Activated naive CD4-positive, alpha-beta T cell treated with anti-CD3 and anti-CD28 coated beads for 36 hours (primary cell): ENCODE measurements at regions of chr9 and their contacts with region 1.

Region 1: DNA sequence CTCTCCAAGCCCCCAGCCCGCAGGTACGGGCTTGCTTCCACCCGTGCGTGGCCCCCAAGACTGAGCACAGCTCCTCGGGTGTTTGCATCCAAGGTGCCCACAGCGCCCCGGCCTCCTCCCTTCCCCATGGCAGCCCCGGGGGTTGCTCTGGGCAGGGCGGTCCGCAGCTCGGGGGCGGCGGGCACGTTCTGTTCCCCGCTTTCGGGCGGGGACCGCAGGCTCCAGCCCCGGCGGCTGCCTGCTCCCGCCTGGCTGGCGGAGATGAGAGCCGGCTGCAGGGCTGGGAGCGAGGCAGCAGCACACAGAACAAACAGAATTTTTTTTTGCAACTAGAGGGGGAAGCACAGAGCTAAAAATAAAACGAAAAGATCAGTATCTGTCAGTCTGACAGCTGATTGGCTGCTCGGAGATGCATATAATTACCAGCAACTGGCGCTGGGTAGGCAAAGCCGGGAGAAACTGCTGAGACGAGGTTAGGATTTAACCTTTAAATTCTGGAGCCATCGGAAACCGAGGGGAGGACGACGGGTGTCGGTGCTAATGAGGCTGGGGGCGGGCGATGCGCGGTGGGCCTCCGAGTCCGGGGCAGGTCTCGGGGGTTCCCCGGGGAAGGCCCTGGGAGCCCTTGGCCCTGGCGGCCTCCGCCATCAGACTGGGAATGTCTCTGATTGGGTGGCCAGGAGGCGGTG is 142.7 kb upstream of the IER5L start:
- DNase-seq: peak; percentile 77
- H3K4me3 Mint-ChIP-seq: peak overlapping the region; percentile 68
- H3K27ac Mint-ChIP-seq: peak overlapping the region; percentile 67
- H3K4me1 Mint-ChIP-seq: peaks cover 18% of the 10 kb centered on the region
- H3K27me3 Mint-ChIP-seq: no peaks in the 10 kb centered on the region

Region 2: GRCh38 chr9:129131300-129132145 is 189.2 kb before region 1 on chr9:
- CTCF ChIA-PET with region 1: interaction called, 16 read pairs
- intact Hi-C with region 1: loop called (anchors 10 kb)
- DNase-seq: peak; percentile 90
- H3K4me3 Mint-ChIP-seq: no peak overlapping the region
- H3K27ac Mint-ChIP-seq: peak overlapping the region; percentile 27
- H3K4me1 Mint-ChIP-seq: peaks cover 6% of the 10 kb centered on the region
- H3K27me3 Mint-ChIP-seq: no peaks in the 10 kb centered on the region

Region 3: DNA sequence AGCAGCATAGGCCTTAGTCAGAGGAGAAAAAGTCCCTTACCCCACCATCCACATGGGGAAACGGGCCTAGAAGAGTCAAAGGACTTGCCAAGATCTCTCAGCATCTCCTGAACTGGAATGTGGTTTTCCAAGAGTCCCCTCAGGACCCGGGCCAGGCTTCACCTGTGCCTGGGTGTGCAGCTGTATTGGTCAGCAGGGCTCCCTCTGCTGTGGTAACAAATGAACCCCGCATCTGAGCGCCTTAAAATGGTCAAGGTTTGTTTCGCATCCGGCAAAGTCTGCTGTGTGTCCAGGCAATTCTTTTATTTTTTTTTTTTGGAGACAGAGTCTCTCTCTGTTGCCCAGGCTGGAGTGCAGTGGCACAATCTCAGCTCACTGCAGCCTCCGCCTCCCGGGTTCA is 25.3 kb after region 1 on chr9:
- CTCF ChIA-PET with region 1: interaction called, 6 read pairs
- intact Hi-C with region 1: loop called (anchors 1 kb)
- DNase-seq: no peak
- H3K4me3 Mint-ChIP-seq: no peak overlapping the region
- H3K27ac Mint-ChIP-seq: no peak overlapping the region
- H3K4me1 Mint-ChIP-seq: peaks cover 3% of the 10 kb centered on the region
- H3K27me3 Mint-ChIP-seq: no peaks in the 10 kb centered on the region

Region 4: GRCh38 chr9:129383561-129384416 is 63.1 kb after region 1 on chr9:
- CTCF ChIA-PET with region 1: no interaction called
- intact Hi-C with region 1: loop called (anchors 5 kb)
- DNase-seq: peak; percentile 80
- H3K4me3 Mint-ChIP-seq: peak overlapping the region; percentile 69
- H3K27ac Mint-ChIP-seq: peak overlapping the region; percentile 66
- H3K4me1 Mint-ChIP-seq: peaks cover 10% of the 10 kb centered on the region
- H3K27me3 Mint-ChIP-seq: no peaks in the 10 kb centered on the region

Region 5: DNA sequence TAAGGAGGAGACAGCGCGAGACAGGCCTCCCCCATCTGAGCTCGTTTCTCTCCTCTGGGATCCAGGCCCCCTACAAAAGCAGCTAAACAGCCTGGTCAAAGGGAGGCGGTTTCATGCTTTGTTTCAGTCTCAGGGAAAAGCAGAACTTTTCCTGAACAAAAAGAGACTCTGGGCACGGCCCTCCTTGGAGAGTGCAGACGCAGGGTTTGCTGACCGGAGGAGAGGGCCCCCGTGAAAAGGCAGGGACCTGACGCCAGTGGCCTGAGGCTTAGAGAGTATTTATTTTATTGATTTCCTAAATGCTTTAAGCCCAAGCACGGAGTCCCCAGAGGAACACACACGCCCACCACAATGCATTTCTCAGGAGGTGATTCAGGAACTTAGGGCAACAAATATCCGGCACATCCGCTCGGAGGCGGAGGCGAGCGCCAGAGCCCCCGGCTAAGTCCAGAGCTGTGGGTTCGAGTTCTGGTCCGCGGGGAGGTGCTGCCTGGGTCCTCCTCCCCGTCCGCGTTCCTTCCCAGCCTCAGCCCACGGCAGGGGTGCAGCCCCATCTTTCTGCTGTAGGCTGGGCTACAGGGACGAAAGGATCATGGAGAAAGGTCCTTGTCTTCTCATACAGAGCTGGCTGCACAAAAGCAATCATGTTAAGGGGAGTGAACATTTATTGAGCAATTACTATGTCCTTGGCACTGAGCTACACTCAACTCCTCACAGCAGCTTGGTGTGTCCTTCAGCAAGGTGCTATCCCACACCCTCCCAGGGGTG is 392.1 kb after region 1 on chr9:
- CTCF ChIA-PET with region 1: no interaction called
- intact Hi-C with region 1: no loop called
- DNase-seq: no peak
- H3K4me3 Mint-ChIP-seq: no peak overlapping the region
- H3K27ac Mint-ChIP-seq: no peak overlapping the region
- H3K4me1 Mint-ChIP-seq: peaks cover 19% of the 10 kb centered on the region
- H3K27me3 Mint-ChIP-seq: no peaks in the 10 kb centered on the region